Endothelial cell of umbilical vein (primary cell): ENCODE measurements at regions of chr16 and their contacts with region 1.

Region 1: DNA sequence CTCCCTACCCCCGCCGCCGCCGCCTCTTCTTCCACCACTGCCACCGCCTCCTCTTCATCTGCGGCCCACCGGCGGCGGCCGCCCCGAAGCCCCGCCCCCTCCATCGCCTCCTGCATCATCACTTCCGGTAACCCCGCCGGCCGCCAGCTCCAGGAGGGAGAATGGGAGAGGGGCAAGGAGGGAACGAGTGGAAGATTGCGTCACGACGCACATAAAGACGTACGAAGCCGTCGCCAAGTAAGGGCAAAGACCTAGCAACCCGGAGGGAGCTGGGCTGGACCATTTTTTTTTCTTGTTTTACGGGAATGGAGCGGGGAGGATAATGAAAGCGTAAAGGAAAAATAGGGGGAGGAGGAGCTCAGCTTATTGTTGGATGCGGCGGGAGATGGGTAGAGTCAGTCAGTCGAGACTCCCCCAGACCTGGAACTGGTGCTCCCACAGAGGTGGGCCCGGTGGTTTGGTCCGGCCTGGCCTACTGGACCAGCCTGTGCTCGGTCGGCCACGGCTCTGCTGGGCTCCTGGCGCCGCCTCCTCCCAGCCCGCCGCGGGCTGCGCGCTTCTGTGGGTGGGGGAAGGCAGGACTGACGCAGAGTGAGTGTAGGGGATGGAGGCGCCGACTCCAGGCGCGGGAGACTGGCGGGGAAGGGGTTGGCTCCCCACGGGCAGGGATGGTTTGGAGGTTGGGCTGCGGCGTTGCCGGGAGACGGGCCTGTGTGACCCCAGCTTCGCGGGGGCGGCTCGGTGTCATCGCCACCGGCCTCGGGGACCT is at the starts of genes DCUN1D3 and LYRM1:
- DNase-seq: peak; percentile 99
- H3K4me3 ChIP-seq: peak within 1 kb of the TSS; percentile 56 to 96 (median 83)
- H3K27ac ChIP-seq: peak within 1 kb of the TSS; percentile 100
- H3K4me1 ChIP-seq: peaks cover 58% of the 10 kb centered on the region
- H3K27me3 ChIP-seq: no peaks in the 10 kb centered on the region
- CTCF ChIP-seq: no peak
- POLR2A ChIP-seq: peak; percentile 78
- total RNA-seq, gene DCUN1D3: 35.0 and 39.6 TPM in 2 replicates
- total RNA-seq, gene LYRM1: 28.4 and 29.1 TPM in 2 replicates

Region 2: GRCh38 chr16:20647736-20648135 is 252.7 kb before region 1 on chr16:
- CTCF ChIA-PET with region 1: no interaction called
- POLR2A ChIA-PET with region 1: no interaction called
- dilution Hi-C with region 1: no loop called
- intact Hi-C with region 1: no loop called
- DNase-seq: no peak
- H3K4me3 ChIP-seq: no peak overlapping the region
- H3K27ac ChIP-seq: no peak overlapping the region
- H3K4me1 ChIP-seq: no peaks in the 10 kb centered on the region
- H3K27me3 ChIP-seq: no peaks in the 10 kb centered on the region
- CTCF ChIP-seq: no peak
- POLR2A ChIP-seq: no peak

Region 3: GRCh38 chr16:20741554-20742285 is 158.8 kb before region 1 on chr16 and contains the start of gene THUMPD1:
- CTCF ChIA-PET with region 1: no interaction called
- POLR2A ChIA-PET with region 1: no interaction called
- dilution Hi-C with region 1: no loop called
- intact Hi-C with region 1: loop called (anchors 5 kb)
- DNase-seq: peak; percentile 95
- H3K4me3 ChIP-seq: peak within 1 kb of the TSS; percentile 66 to 98 (median 91)
- H3K27ac ChIP-seq: peak within 1 kb of the TSS; percentile 74
- H3K4me1 ChIP-seq: peaks cover 10% of the 10 kb centered on the region
- H3K27me3 ChIP-seq: no peaks in the 10 kb centered on the region
- CTCF ChIP-seq: peak; percentile 9 to 25
- POLR2A ChIP-seq: peak; percentile 69
- total RNA-seq, gene THUMPD1: 29.0 and 30.7 TPM in 2 replicates

Region 4: DNA sequence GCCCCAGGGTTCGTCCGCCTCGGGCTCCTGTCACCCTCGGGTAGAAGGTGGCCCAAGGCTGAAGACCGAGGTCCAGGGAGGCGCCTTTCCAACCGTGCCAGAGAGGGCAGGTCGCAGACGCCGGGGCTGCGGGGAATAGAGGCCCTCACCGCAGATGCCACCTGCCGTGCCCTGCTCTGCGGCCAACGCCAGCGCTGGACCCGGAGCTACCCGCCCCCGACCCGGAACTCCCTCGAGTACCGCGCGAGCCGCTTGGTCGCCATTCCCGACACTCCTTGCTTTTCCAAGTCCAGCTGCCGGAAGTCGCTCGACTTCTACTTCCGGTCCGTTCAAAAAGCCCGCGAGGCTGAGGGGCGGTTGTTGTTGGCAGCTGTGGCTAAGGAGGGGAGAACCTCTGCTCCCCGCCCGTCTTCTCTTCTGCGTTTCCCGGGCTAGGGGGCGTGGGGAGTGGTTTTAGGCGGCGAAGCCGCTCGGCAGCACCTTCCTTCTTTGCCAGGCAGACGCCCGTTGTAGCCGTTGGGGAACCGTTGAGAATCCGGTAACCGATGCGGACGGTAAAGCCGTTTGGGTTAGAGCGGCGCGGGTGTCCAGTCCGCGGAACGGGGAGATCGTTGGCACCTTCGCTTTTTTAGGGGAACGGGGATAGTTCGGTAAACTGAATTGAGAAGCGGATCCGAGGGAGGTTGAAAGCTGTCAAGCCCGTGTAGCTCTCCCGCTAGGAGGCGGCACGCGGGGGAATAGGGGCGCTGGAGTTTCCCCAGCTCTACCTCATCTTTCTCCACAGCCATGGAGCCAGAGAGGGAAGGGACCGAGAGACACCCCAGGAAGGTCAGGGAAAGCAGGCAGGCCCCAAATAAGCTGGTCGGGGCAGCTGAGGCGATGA is 94.1 kb before region 1 on chr16 and contains the starts of genes ERI2 and REXO5:
- CTCF ChIA-PET with region 1: interaction called, 4 read pairs
- POLR2A ChIA-PET with region 1: interaction called, 3 read pairs
- dilution Hi-C with region 1: no loop called
- intact Hi-C with region 1: loop called (anchors 5 kb)
- DNase-seq: peak; percentile 94
- H3K4me3 ChIP-seq: peak within 1 kb of the TSS; percentile 44 to 68 (median 50)
- H3K27ac ChIP-seq: peak within 1 kb of the TSS; percentile 49
- H3K4me1 ChIP-seq: peaks cover 8% of the 10 kb centered on the region
- H3K27me3 ChIP-seq: no peaks in the 10 kb centered on the region
- CTCF ChIP-seq: peak; percentile 36 to 66
- POLR2A ChIP-seq: peak; percentile 76
- total RNA-seq, gene ERI2: 8.9 and 9.3 TPM in 2 replicates
- total RNA-seq, gene REXO5: 7.4 and 11.5 TPM in 2 replicates

Region 5: GRCh38 chr16:20866145-20866772 is 34.2 kb before region 1 on chr16:
- CTCF ChIA-PET with region 1: interaction called, 10 read pairs
- POLR2A ChIA-PET with region 1: interaction called, 12 read pairs
- dilution Hi-C with region 1: no loop called
- intact Hi-C with region 1: loop called (anchors 1 kb)
- DNase-seq: peak; percentile 90
- H3K4me3 ChIP-seq: no peak overlapping the region
- H3K27ac ChIP-seq: peak overlapping the region; percentile 97
- H3K4me1 ChIP-seq: peaks cover 55% of the 10 kb centered on the region
- H3K27me3 ChIP-seq: no peaks in the 10 kb centered on the region
- CTCF ChIP-seq: no peak
- POLR2A ChIP-seq: peak; percentile 42

Region 6: GRCh38 chr16:20910781-20911321 is 10.4 kb after region 1 on chr16:
- CTCF ChIA-PET with region 1: no interaction called
- POLR2A ChIA-PET with region 1: interaction called, 12 read pairs
- dilution Hi-C with region 1: no loop called
- intact Hi-C with region 1: loop called (anchors 1 kb)
- DNase-seq: peak; percentile 95
- H3K4me3 ChIP-seq: peak overlapping the region in 1 of 3 experiments; percentile 12
- H3K27ac ChIP-seq: peak overlapping the region; percentile 99
- H3K4me1 ChIP-seq: peaks cover 68% of the 10 kb centered on the region
- H3K27me3 ChIP-seq: no peaks in the 10 kb centered on the region
- CTCF ChIP-seq: no peak
- POLR2A ChIP-seq: peak; percentile 91

Region 7: GRCh38 chr16:20937736-20938135 is 37.3 kb after region 1 on chr16:
- CTCF ChIA-PET with region 1: no interaction called
- POLR2A ChIA-PET with region 1: no interaction called
- dilution Hi-C with region 1: no loop called
- intact Hi-C with region 1: no loop called
- DNase-seq: no peak
- H3K4me3 ChIP-seq: no peak overlapping the region
- H3K27ac ChIP-seq: no peak overlapping the region
- H3K4me1 ChIP-seq: no peaks in the 10 kb centered on the region
- H3K27me3 ChIP-seq: no peaks in the 10 kb centered on the region
- CTCF ChIP-seq: no peak
- POLR2A ChIP-seq: no peak

Region 8: GRCh38 chr16:21076186-21076883 is 175.9 kb after region 1 on chr16:
- CTCF ChIA-PET with region 1: no interaction called
- POLR2A ChIA-PET with region 1: no interaction called
- dilution Hi-C with region 1: no loop called
- intact Hi-C with region 1: loop called (anchors 1 kb)
- DNase-seq: peak; percentile 37
- H3K4me3 ChIP-seq: no peak overlapping the region
- H3K27ac ChIP-seq: peak overlapping the region; percentile 46
- H3K4me1 ChIP-seq: peaks cover 15% of the 10 kb centered on the region
- H3K27me3 ChIP-seq: no peaks in the 10 kb centered on the region
- CTCF ChIP-seq: no peak
- POLR2A ChIP-seq: no peak